ENCODE measurements at regions of chr5 and their contacts with region 1.

Region 1: DNA sequence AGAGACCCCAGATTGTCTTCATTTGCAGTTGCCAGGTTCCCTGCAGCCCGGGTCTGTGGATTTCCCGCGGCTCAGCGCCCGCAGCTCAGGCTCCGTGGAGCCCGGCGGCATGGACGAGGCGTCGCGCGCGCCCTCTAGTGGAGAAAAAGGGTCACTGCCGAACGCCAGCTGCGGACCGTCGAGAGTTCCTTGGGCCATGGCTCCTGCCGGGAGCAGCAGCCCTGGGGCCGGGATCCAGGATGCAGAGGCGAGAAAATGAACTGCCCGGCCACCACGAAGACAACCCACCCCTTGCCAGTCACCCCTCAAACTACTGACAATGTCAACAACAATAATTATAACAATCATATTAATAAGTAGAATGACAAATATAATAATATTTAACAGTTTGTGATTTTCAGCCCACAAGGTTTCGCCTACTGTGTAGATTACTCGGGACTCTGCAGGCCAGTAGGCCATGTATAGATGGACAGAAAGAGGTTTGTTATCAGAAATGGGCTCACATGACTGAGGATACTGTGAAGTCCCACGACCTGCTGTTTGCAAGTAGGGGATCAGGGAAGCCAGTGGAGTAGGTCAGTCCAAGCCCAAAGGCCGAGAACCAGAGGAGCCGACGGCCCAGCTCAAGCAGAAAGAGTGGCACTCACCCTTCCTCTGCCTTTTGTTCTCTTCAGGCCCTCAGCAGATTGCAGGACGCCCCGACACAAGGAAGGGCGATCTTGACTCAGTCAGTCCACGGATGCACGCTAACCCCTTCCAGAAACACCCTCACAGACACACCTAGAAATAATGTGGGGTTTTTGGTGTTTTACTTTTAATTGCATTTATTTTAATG is 43.1 kb downstream of the BOD1 start:
- DNase-seq: peak; percentile 95

Region 2: GRCh38 chr5:173293817-173294672 is 279.3 kb before region 1 on chr5:
- intact Hi-C with region 1: loop called (anchors 5 to 10 kb)
- DNase-seq: peak; percentile 90

Region 3: DNA sequence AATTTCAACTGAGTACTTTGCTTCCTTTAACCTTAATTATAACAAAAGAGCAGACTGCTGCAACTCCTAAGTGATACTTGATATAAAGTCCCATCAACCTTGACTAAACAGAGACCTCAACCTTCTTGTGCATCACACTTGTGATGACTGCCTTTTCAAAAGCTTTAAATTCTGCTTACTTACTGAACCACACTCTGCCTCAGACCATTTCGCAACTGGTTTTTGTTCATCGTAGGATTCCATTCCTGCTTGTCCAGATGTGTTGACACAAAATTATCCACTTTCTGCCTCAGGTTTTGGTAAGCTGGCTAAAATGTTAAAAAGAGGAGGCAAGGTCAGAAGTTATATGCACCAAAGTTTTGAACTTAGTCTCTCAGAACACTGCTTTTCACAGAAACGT is 39.6 kb after region 1 on chr5:
- intact Hi-C with region 1: no loop called
- DNase-seq: no peak